CD8-positive, alpha-beta memory T cell (primary cell): ENCODE measurements at regions of chr11 and their contacts with region 1.

Region 1: GRCh38 chr11:123020968-123021367 is 39.3 kb upstream of the BSX start:
- DNase-seq: peak in 2 of 5 donors; percentile 7 to 18
- H3K4me3 ChIP-seq: no peak overlapping the region
- H3K4me3 Mint-ChIP-seq: no peak overlapping the region
- H3K27ac ChIP-seq: no peak overlapping the region
- H3K27ac Mint-ChIP-seq: peak overlapping the region in 1 of 8 donors; percentile 40
- H3K4me1 ChIP-seq: no peaks in the 10 kb centered on the region
- H3K4me1 Mint-ChIP-seq: peaks cover 5 to 10% (median 8%) of the 10 kb centered on the region in 3 donors
- H3K27me3 ChIP-seq: no peaks in the 10 kb centered on the region
- H3K27me3 Mint-ChIP-seq: peaks cover 5 to 12% of the 10 kb centered on the region in 2 donors

Region 2: DNA sequence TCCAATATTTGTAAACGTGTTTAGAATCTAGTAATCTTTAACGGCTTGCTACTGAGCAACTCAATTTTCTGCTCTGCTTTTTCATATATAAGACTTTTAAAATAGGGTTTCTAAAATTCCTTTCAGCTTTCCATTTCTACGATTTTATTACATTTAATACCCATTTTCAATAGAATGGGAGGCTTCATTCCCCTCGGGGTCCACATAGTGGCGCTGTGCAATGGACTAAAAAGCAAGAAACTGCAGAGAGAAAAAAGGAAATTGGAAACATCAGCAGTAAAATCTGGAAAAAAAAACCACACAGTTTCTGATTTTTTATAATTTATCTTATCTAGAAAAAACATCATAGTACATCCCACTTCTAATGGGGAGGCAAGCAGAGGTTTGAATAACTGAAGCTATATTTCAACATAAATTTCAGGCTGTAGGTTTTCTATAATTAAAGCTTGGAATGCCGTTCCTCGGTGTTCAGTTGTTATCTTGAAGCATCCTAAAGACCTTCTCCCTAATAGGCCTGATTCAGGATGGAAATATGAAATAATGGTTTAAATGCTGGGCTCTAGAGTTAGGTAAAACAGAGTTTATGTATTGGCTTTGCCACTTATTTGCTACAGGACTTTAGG is 157.2 kb before region 1 on chr11:
- CTCF ChIA-PET with region 1: interaction called, 18 read pairs
- POLR2A ChIA-PET with region 1: no interaction called
- DNase-seq: peak in 1 of 5 donors; percentile 53
- H3K4me3 ChIP-seq: no peak overlapping the region
- H3K4me3 Mint-ChIP-seq: no peak overlapping the region
- H3K27ac ChIP-seq: no peak overlapping the region
- H3K27ac Mint-ChIP-seq: peak overlapping the region in 1 of 8 donors; percentile 70
- H3K4me1 ChIP-seq: no peaks in the 10 kb centered on the region
- H3K4me1 Mint-ChIP-seq: peaks cover 0 to 10% (median 4%) of the 10 kb centered on the region in 3 donors
- H3K27me3 ChIP-seq: no peaks in the 10 kb centered on the region
- H3K27me3 Mint-ChIP-seq: no peaks in the 10 kb centered on the region

Region 3: GRCh38 chr11:123033895-123034294 is 12.9 kb after region 1 on chr11:
- CTCF ChIA-PET with region 1: interaction called, 17 read pairs
- POLR2A ChIA-PET with region 1: no interaction called
- DNase-seq: no peak
- H3K4me3 ChIP-seq: no peak overlapping the region
- H3K4me3 Mint-ChIP-seq: no peak overlapping the region
- H3K27ac ChIP-seq: no peak overlapping the region
- H3K27ac Mint-ChIP-seq: peak overlapping the region in 1 of 8 donors; percentile 35
- H3K4me1 ChIP-seq: no peaks in the 10 kb centered on the region
- H3K4me1 Mint-ChIP-seq: peaks cover 0 to 6% (median 0%) of the 10 kb centered on the region in 3 donors
- H3K27me3 ChIP-seq: no peaks in the 10 kb centered on the region
- H3K27me3 Mint-ChIP-seq: peaks cover 0 to 4% of the 10 kb centered on the region in 2 donors